ENCODE measurements at regions of chr1 and their contacts with region 1.

Region 1: GRCh38 chr1:181166377-181167196 is 78.1 kb downstream of the IER5 start:
- H3K4me3 ChIP-seq: no peak overlapping the region
- H3K27ac ChIP-seq: no peak overlapping the region
- H3K4me1 ChIP-seq: no peaks in the 10 kb centered on the region
- CTCF ChIP-seq: peak; percentile 32; the same call in 1 of the 2 replicates

Region 2: DNA sequence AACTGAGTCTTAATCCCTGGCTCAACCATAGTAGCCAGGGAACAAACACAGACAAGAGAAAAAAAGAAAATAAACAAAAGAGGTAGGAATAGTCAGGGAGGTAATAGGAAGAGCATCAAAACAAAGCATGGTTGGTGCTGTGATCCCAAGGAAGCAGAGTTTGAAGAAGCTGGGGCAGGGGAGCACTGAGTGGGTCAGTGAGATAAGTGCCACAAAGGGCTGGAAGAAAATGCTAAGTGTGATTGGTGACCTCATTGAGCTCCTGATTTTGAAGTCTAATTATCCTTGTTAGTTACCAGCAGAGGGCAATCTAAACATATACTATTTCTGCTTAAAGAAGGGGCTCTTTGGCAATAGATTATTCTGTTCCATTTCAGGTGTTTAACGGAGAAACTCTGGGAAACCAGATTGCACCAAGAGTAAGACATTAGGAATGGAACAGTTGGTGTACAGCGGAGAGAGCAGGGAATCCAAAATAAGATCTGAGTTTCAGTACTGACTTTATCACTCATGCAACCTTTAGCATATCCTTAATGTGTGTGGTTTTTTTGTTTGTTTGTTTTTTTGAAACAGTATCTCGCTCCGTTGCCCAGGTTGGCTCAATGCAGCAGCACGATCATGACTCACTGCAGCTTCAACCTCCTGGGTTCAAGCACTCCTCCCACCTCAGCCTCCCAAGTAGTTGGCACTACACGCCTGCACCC is 284.6 kb before region 1 on chr1:
- CTCF ChIA-PET with region 1: interaction called, 12 read pairs
- POLR2A ChIA-PET with region 1: interaction called, 3 read pairs
- H3K4me3 ChIP-seq: no peak overlapping the region
- H3K27ac ChIP-seq: no peak overlapping the region
- H3K4me1 ChIP-seq: peaks cover 5% of the 10 kb centered on the region; the same call in 1 of the 2 replicates
- CTCF ChIP-seq: no peak